ENCODE measurements at regions of chr14 and their contacts with region 1.

Region 1: DNA sequence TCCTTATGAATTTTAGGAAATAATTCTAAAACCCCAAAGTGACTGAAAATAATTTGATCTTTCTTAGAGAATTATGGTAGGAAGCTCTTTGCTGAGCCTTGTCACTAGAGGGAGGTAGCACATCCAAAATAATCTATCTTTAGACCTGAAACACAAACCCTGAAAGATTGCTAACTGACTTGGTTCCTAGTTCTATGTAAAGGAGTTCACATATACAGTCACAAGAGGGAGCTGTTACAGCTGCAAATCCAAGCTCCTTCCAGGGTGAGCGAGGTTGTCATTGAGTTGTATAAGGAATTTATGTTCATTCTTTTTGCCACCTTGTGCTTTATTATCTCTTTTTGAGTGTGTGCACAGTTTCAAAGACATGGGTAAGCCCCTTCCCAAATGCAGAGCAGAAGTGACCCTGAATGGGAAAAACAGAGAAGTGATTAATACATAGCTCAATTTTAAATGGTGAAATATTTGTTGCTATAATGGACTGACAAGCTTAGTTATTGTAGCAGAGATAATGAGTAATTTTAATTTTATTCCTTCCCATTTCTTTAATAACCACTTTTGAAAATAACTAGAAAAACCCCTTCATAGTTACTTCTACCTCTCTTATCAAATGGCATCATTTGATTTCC is 387.9 kb downstream of the DAD1 start:
- DNase-seq: peak; percentile 57
- H3K4me3 Mint-ChIP-seq: no peak overlapping the region
- H3K27ac Mint-ChIP-seq: no peak overlapping the region
- H3K4me1 Mint-ChIP-seq: peaks cover 6% of the 10 kb centered on the region
- H3K27me3 Mint-ChIP-seq: peaks cover 12% of the 10 kb centered on the region
- CTCF ChIP-seq: peak; percentile 64

Region 2: GRCh38 chr14:21437063-21437901 is 763.8 kb before region 1 on chr14:
- CTCF ChIA-PET with region 1: no interaction called
- POLR2A ChIA-PET with region 1: no interaction called
- intact Hi-C with region 1: no loop called
- DNase-seq: peak; percentile 99
- H3K4me3 Mint-ChIP-seq: peak overlapping the region; percentile 83
- H3K27ac Mint-ChIP-seq: peak overlapping the region; percentile 93
- H3K4me1 Mint-ChIP-seq: peaks cover 26% of the 10 kb centered on the region
- H3K27me3 Mint-ChIP-seq: no peaks in the 10 kb centered on the region
- CTCF ChIP-seq: no peak

Region 3: DNA sequence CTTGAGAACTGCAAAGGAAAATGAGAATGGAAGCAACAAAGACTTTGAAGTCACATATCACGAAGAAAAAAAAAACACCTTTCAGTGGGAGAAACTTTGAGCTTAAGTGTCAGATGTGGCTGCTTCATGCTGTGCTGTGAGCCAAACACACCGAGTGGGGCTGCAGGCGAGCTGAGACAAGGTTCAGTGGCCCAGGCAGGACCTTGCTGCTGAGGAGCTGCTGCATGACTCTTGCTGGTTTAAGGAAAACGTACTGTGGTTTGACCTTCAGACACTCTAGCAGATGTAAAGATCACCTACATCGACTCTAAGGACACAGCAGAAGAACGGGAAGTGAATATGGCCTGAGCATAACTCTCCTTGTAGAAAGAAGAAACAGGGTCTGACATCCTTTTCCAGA is 409.3 kb before region 1 on chr14:
- CTCF ChIA-PET with region 1: no interaction called
- POLR2A ChIA-PET with region 1: no interaction called
- intact Hi-C with region 1: no loop called
- DNase-seq: no peak
- H3K4me3 Mint-ChIP-seq: no peak overlapping the region
- H3K27ac Mint-ChIP-seq: no peak overlapping the region
- H3K4me1 Mint-ChIP-seq: no peaks in the 10 kb centered on the region
- H3K27me3 Mint-ChIP-seq: peaks cover 71% of the 10 kb centered on the region
- CTCF ChIP-seq: no peak

Region 4: GRCh38 chr14:21978184-21978998 is 222.7 kb before region 1 on chr14:
- CTCF ChIA-PET with region 1: no interaction called
- POLR2A ChIA-PET with region 1: no interaction called
- intact Hi-C with region 1: no loop called
- DNase-seq: peak; percentile 60
- H3K4me3 Mint-ChIP-seq: no peak overlapping the region
- H3K27ac Mint-ChIP-seq: no peak overlapping the region
- H3K4me1 Mint-ChIP-seq: no peaks in the 10 kb centered on the region
- H3K27me3 Mint-ChIP-seq: peaks cover 77% of the 10 kb centered on the region
- CTCF ChIP-seq: peak; percentile 65

Region 5: GRCh38 chr14:22143363-22143762 is 57.7 kb before region 1 on chr14:
- CTCF ChIA-PET with region 1: interaction called, 14 read pairs
- POLR2A ChIA-PET with region 1: no interaction called
- intact Hi-C with region 1: no loop called
- DNase-seq: peak; percentile 29
- H3K4me3 Mint-ChIP-seq: no peak overlapping the region
- H3K27ac Mint-ChIP-seq: no peak overlapping the region
- H3K4me1 Mint-ChIP-seq: no peaks in the 10 kb centered on the region
- H3K27me3 Mint-ChIP-seq: peaks cover 22% of the 10 kb centered on the region
- CTCF ChIP-seq: no peak

Region 6: DNA sequence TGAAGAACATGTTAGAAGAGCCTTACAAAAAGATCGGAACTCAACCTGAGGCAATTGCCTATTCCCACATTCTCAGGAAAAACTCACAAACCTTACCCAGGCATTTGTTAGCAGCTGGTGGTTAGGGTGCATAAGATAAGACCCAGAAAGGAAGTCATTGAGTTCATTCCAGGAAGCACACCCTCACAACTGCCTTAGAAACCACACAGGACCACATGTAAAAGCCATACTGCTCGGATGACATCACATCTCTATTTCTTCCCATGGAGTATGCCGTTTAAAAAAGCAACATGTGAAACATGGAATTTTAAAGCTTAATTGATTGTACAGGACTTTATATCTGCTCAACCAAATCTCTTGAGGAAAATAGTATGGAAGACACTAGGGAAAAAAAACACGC is 23.2 kb before region 1 on chr14:
- CTCF ChIA-PET with region 1: interaction called, 15 read pairs
- POLR2A ChIA-PET with region 1: no interaction called
- intact Hi-C with region 1: no loop called
- DNase-seq: no peak
- H3K4me3 Mint-ChIP-seq: no peak overlapping the region
- H3K27ac Mint-ChIP-seq: no peak overlapping the region
- H3K4me1 Mint-ChIP-seq: no peaks in the 10 kb centered on the region
- H3K27me3 Mint-ChIP-seq: peaks cover 23% of the 10 kb centered on the region
- CTCF ChIP-seq: no peak

Region 7: GRCh38 chr14:22213120-22213519 is 12.0 kb after region 1 on chr14:
- CTCF ChIA-PET with region 1: interaction called, 25 read pairs
- POLR2A ChIA-PET with region 1: no interaction called
- intact Hi-C with region 1: no loop called
- DNase-seq: peak; percentile 58
- H3K4me3 Mint-ChIP-seq: no peak overlapping the region
- H3K27ac Mint-ChIP-seq: no peak overlapping the region
- H3K4me1 Mint-ChIP-seq: peaks cover 7% of the 10 kb centered on the region
- H3K27me3 Mint-ChIP-seq: no peaks in the 10 kb centered on the region
- CTCF ChIP-seq: no peak

Region 8: GRCh38 chr14:22276913-22277816 is 76.1 kb after region 1 on chr14:
- CTCF ChIA-PET with region 1: interaction called, 8 read pairs
- POLR2A ChIA-PET with region 1: no interaction called
- intact Hi-C with region 1: loop called (anchors 1 kb)
- DNase-seq: peak; percentile 34
- H3K4me3 Mint-ChIP-seq: no peak overlapping the region
- H3K27ac Mint-ChIP-seq: no peak overlapping the region
- H3K4me1 Mint-ChIP-seq: no peaks in the 10 kb centered on the region
- H3K27me3 Mint-ChIP-seq: peaks cover 48% of the 10 kb centered on the region
- CTCF ChIP-seq: peak; percentile 55

Region 9: DNA sequence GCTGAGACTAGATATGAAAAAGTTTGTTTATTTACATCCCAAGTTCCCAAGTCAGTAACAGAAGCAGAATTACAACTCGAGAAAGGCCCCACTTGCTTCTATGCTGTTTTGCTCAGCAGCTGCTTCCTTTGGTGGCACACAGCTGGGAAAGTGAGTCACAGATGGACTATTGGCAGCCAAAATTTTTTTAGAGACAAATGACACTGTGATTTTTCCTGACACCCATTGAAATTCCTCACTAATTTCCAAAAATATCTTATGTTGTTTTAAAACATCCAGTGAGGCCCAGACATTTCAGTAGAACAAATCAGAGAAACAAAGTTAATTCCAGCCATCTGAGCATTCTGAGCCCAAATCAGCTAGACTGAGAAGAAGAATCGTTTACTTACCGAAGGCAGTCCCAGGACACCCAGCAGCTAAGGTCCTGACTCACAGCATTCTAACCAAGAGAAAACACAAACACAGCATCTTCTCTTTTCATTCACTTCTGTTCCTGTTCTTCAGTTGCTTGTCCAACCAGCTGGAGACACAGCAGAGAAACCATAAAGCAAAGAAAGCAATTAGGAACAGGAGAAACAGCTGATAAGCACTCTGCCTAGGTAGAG is 199.7 kb after region 1 on chr14:
- CTCF ChIA-PET with region 1: no interaction called
- POLR2A ChIA-PET with region 1: no interaction called
- intact Hi-C with region 1: no loop called
- DNase-seq: no peak
- H3K4me3 Mint-ChIP-seq: no peak overlapping the region
- H3K27ac Mint-ChIP-seq: no peak overlapping the region
- H3K4me1 Mint-ChIP-seq: no peaks in the 10 kb centered on the region
- H3K27me3 Mint-ChIP-seq: peaks cover 55% of the 10 kb centered on the region
- CTCF ChIP-seq: no peak

Measured in MCF 10A (cell line).